ENCODE measurements at regions of chr18 and their contacts with region 1.

Region 1: DNA sequence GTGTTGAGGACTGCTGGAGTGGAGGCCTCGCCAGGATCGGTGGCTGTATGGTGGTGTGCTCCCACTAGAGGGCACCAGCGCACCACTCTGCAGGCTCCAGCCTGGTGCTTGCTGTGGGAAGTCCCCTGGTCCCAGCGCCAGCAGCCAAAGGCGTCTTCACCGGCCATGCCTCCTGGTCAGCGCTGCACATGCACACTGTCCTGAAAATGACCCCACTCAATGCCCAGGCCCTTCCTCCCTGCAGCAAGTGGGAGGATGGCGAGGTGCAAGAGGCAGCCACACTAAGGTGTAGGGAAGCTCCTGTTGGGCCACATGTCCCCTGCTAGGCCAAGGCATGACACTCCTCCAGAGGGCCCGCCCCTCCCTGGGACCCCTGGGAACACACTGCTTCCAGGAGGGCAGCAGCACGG is 136.5 kb downstream of the CTIF start:
- DNase-seq: peak; percentile 42
- ATAC-seq: peak; percentile 97
- H3K4me3 ChIP-seq: no peak overlapping the region
- H3K27ac ChIP-seq: no peak overlapping the region
- H3K4me1 ChIP-seq: no peaks in the 10 kb centered on the region
- H3K27me3 ChIP-seq: no peaks in the 10 kb centered on the region
- CTCF ChIP-seq: peak; percentile 83

Region 2: GRCh38 chr18:48367557-48367956 is 307.8 kb before region 1 on chr18:
- CTCF ChIA-PET with region 1: no interaction called
- POLR2A ChIA-PET with region 1: no interaction called
- in situ Hi-C with region 1: no loop called
- intact Hi-C with region 1: no loop called
- DNase-seq: no peak
- ATAC-seq: no peak
- H3K4me3 ChIP-seq: no peak overlapping the region
- H3K27ac ChIP-seq: no peak overlapping the region
- H3K4me1 ChIP-seq: no peaks in the 10 kb centered on the region
- H3K27me3 ChIP-seq: no peaks in the 10 kb centered on the region
- CTCF ChIP-seq: no peak

Region 3: GRCh38 chr18:48951448-48952286 is 276.3 kb after region 1 on chr18:
- CTCF ChIA-PET with region 1: no interaction called
- POLR2A ChIA-PET with region 1: no interaction called
- in situ Hi-C with region 1: no loop called
- intact Hi-C with region 1: loop called (anchors 10 kb)
- DNase-seq: no peak
- ATAC-seq: peak; percentile 70
- H3K4me3 ChIP-seq: peak overlapping the region; percentile 81 to 83
- H3K27ac ChIP-seq: peak overlapping the region; percentile 91
- H3K4me1 ChIP-seq: peaks cover 19% of the 10 kb centered on the region
- H3K27me3 ChIP-seq: no peaks in the 10 kb centered on the region
- CTCF ChIP-seq: peak; percentile 22; the same call in 1 of the 2 replicates

Region 4: DNA sequence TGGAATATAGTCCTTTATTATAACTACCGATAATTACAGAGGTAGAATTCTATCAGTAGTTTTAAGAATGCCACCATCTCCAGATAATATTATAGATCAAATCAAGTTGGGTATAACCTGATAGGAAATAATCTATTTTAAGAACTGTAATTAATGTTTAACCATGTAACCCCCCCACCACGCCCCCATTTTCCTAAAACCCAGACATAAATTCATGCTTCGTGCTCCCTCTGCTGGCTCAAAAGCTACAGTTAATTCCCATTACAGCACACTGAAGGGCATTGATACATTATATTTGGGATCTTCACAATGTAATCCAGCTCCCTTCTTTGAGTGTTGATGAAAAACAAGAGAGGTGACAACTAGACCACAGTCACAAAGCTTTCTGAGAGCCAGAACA is 503.4 kb after region 1 on chr18:
- CTCF ChIA-PET with region 1: no interaction called
- POLR2A ChIA-PET with region 1: no interaction called
- in situ Hi-C with region 1: no loop called
- intact Hi-C with region 1: loop called (anchors 5 kb)
- DNase-seq: no peak
- ATAC-seq: no peak
- H3K4me3 ChIP-seq: no peak overlapping the region
- H3K27ac ChIP-seq: no peak overlapping the region
- H3K4me1 ChIP-seq: no peaks in the 10 kb centered on the region; the same call in 1 of the 2 replicates
- H3K27me3 ChIP-seq: no peaks in the 10 kb centered on the region
- CTCF ChIP-seq: peak; percentile 58; the same call in 1 of the 2 replicates

Region 5: DNA sequence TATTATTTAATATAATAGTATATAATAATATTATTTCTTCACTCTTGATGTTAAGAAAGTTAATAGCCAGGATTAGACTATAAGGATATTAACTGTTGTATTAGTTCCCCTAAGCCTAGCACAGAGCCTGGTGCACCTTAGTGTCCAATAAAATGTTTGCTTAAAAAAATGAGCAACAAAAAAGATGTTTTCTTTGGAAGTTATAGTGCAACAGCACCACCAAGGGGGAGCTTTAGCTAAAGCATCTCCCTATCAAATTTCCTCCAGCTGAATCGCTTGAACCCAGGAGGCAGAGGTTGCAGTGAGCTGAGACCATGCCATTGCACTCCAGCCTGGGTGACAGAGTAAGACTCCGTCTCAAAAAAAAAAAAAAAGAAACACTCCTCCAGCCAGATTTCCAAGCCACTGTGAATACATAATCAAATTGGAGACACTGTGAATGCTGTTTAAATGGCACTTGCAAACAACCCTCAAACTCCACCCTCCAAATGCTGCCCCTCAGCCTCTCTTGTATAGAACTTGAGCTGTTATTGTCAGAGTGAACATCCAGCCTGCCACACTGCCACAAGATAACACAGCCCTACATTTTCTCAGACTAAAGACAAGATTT is 563.2 kb after region 1 on chr18:
- CTCF ChIA-PET with region 1: interaction called, 3 read pairs
- POLR2A ChIA-PET with region 1: no interaction called
- in situ Hi-C with region 1: no loop called
- intact Hi-C with region 1: loop called (anchors 5 kb)
- DNase-seq: no peak
- ATAC-seq: no peak
- H3K4me3 ChIP-seq: no peak overlapping the region
- H3K27ac ChIP-seq: no peak overlapping the region
- H3K4me1 ChIP-seq: no peaks in the 10 kb centered on the region
- H3K27me3 ChIP-seq: no peaks in the 10 kb centered on the region
- CTCF ChIP-seq: peak; percentile 47; the same call in 1 of the 2 replicates